AG04449 (cell line): ENCODE measurements at regions of chr5 and their contacts with region 1.

Region 1: GRCh38 chr5:177403792-177404640 is 3.6 kb upstream of the PFN3 start:
- DNase-seq: no peak
- H3K4me3 ChIP-seq: peak overlapping the region; percentile 71
- CTCF ChIP-seq: peak; percentile 91

Region 2: GRCh38 chr5:177296581-177296980 is 107.4 kb before region 1 on chr5:
- CTCF ChIA-PET with region 1: no interaction called
- POLR2A ChIA-PET with region 1: no interaction called
- DNase-seq: no peak
- H3K4me3 ChIP-seq: no peak overlapping the region
- CTCF ChIP-seq: no peak

Region 3: DNA sequence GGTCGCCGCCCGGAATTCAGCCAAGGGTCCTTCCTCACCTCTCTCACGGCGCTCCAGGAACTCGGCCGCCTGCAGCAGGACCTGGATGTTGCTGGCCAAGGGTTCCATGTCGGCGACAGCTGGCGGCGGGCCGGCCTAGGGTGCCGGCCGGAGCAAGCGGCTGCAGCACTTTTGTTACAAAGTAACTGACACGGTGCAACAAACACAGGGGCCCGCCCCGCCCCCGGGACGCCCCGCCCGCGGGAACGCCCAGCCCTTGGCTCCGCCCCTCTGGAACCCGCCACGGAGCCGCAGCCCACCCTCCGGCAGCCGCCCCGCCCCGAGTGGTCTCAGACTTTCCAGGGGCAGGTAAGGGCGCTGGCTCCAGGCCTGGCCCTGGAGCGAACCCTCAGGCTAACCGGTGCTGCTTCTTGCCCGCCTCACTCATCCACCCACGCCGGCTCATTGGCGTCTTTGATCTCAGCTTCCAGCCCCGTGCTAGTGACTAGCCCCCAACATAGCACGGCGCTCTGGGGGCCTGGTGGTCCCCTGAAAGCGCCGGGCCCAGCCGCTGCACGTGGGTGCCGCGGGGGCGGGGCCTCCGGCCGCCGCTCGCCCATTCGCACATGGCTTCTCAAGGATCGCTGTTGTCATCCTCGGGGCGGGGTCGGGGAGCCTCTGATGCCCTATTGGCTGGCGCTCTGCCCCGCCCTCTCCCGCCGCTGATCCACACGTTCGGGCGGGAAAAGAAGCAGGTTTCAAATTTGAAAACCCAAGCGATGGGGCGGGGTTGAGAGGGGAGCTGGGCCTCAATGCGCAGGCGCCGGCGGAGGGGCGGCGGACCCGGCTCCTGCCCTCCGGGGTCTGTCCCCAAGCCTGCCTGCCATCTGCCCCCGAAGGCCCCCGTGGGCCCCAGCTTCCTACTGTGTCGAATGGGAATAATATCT is 92.0 kb before region 1 on chr5 and contains the start of gene MXD3:
- CTCF ChIA-PET with region 1: interaction called, 35 read pairs
- POLR2A ChIA-PET with region 1: no interaction called
- DNase-seq: no peak
- H3K4me3 ChIP-seq: peak within 1 kb of the TSS; percentile 68
- CTCF ChIP-seq: no peak

Region 4: GRCh38 chr5:177351385-177352329 is 52.4 kb before region 1 on chr5 and contains the start of gene LMAN2:
- CTCF ChIA-PET with region 1: interaction called, 21 read pairs
- POLR2A ChIA-PET with region 1: no interaction called
- DNase-seq: peak; percentile 80
- H3K4me3 ChIP-seq: peak within 1 kb of the TSS; percentile 97
- CTCF ChIP-seq: no peak

Region 5: DNA sequence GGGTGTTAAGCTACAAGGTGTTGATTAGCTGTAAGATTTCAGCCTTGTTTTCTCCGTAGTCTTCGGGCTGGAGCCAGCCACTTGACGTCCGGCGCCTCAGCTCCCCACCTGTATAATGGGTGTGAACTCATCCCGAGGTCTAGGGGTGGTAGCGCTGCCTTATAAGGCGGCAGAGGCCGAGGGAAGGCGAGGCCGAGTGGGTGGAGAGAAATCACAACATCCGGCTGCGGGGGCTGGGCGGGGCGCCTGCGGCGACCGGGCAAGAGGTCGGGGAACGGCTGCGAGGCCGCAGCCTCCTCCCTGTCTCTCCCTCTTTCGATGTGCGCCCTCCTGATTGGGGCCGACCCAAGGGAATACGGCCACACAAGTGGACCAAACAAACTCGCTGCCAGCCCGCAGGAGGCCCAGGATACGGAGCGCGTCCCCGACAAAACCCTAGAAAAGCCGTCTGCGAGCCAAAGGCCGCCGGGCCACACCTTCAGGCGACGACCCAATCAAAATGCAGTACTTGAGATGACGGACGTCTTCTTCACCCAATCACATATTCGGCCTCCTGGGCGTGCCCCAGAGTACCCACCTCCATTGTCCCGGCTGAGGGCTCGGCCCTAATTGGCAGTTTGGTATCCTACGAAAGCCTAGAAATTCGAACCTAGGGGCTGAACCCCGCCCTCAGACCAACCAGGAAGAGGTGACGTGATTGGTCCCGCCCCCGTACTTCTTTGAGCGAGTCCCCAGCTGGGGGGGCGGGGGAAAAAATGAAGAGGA is 22.0 kb after region 1 on chr5:
- CTCF ChIA-PET with region 1: interaction called, 45 read pairs
- POLR2A ChIA-PET with region 1: no interaction called
- DNase-seq: peak; percentile 100
- H3K4me3 ChIP-seq: peak overlapping the region; percentile 69
- CTCF ChIP-seq: no peak

Region 6: DNA sequence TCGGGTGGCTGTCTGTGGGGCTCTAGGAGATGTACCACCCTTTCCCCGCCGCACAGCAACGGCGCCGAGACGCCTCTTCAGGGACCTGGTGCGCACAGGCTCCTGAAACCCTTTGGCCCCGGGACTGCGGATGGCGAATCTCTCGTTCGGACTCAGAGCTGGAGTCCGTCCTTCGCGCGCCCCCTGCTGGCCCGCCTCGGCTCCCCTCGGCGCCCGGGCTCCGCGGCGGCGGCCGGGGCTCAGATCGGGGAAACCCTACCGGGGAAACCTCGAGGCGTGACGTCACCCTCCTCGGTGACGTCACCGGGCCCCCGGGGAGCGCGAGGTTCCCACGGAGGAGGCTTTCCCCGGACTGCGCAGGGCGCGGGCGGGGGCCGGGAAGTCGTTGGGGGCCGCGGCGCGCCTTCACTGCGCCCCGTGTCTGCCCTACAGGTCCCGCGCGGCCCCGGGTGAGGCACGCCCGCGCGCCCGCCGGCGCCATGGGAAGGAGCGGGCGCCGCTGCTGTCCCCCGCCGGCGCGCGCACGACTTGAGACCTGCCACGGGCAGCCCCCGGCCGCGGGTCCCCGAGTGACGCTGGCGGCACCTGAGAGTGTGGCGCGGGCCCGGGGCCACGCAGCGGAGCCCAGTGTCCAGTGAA is 50.5 kb after region 1 on chr5:
- CTCF ChIA-PET with region 1: interaction called, 376 read pairs
- POLR2A ChIA-PET with region 1: interaction called, 13 read pairs
- DNase-seq: no peak
- H3K4me3 ChIP-seq: peak overlapping the region; percentile 47
- CTCF ChIP-seq: peak; percentile 79

Region 7: GRCh38 chr5:177473461-177474001 is 69.5 kb after region 1 on chr5 and contains the start of gene DBN1:
- CTCF ChIA-PET with region 1: interaction called, 10 read pairs
- POLR2A ChIA-PET with region 1: interaction called, 13 read pairs
- DNase-seq: no peak
- H3K4me3 ChIP-seq: peak within 1 kb of the TSS; percentile 89
- CTCF ChIP-seq: no peak